Left colon (tissue), 2 donors: ENCODE measurements at regions of chr19 and their contacts with region 1.

Region 1: DNA sequence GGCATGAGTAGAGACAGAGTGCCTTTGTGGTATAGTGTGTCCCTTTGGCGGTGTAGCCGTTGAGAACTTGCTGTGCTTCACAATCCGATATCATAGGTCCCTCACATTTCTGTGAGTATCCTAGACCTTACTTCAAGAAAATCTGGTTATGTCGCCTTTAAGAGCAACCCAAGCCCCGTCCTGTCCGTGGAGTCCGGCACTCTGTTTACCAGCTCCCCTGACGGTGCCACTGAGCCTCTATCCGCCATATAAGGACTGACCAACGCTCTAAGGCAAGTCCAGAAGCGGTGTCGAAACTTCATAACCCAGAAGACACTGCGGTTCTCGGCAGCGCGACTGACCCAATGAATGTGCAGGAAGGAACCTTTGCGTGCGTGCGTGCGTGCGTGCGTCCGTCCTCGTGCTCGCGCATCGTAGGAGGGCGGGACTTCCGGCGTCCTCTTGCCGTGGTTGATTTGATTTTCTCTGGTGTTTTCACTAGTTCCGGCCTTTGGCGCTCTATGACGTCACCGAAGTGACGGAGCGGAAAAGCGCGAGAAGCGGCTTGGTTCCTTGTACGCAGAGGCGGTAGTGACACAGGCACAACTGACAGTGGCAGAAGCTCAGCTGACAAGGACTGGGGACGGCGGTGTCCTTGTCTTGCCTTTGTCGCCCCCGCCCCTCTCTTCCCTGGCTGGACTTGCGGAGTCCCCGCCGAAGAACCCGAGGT is at the starts of genes TRAPPC2B and ZNF547:
- DNase-seq: peak; percentile 99
- ATAC-seq: peak; percentile 99
- total RNA-seq, gene TRAPPC2B: 4.4 to 4.5 TPM
- total RNA-seq, gene ZNF547: 1.4 to 1.8 TPM

Region 2: GRCh38 chr19:57348136-57348535 is 15.0 kb before region 1 on chr19:
- intact Hi-C with region 1: loop called in 1 of 2 experiments (anchors 2 kb)
- DNase-seq: no peak
- ATAC-seq: no peak

Region 3: DNA sequence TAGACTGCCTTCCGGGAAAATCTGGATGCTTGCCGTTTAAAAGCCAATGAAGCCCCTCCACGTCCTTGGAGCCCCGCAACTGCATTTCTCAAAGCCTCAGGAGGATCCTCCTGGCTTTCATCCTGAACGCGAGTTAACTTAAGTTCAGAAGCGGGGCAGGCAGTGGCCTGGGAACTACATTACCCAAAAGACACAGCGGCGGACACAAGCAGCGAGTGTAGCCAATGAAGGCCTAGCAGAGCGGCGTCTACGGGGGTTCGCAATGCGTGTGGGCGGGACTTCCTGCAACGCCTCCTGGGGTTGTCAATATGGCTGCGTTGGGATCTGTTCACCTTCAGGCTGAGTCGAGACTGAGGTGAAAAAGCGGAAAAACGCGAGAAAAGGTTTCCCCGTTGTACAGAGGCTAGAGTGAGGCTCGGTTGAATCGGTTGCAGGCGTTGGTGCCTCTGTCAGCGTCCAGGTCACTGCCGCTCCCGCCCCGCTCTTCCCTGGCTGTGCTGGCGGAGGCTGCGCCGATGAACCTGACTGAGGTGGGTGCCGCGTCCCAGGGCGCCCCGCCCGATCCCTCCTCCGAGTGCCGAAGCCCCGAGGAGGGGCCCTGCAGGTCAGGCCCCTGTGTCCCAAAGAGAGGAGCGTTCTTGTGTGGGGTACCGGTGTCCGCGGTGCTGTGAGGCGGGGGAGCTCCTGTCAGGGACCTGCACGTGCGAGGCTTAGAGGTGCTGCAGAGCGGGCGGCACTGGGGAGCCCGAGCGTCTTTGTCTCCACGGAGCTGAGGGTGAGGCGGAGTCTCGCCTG is 47.9 kb after region 1 on chr19 and contains the start of gene ZNF17:
- intact Hi-C with region 1: no loop called
- DNase-seq: peak; percentile 95
- ATAC-seq: peak; percentile 100
- total RNA-seq, gene ZNF17: 7.7 to 12.1 TPM